ENCODE measurements at regions of chr13 and their contacts with region 1.

Region 1: GRCh38 chr13:40666045-40666904 is at the start of gene FOXO1:
- DNase-seq: peak; percentile 93
- ATAC-seq: peak; percentile 70
- H3K4me3 Mint-ChIP-seq: peak within 1 kb of the TSS; percentile 91
- H3K27ac Mint-ChIP-seq: peak within 1 kb of the TSS; percentile 92
- H3K4me1 Mint-ChIP-seq: peaks cover 39% of the 10 kb centered on the region
- H3K27me3 Mint-ChIP-seq: no peaks in the 10 kb centered on the region
- total RNA-seq, gene FOXO1: 37.5 to 42.5 TPM

Region 2: DNA sequence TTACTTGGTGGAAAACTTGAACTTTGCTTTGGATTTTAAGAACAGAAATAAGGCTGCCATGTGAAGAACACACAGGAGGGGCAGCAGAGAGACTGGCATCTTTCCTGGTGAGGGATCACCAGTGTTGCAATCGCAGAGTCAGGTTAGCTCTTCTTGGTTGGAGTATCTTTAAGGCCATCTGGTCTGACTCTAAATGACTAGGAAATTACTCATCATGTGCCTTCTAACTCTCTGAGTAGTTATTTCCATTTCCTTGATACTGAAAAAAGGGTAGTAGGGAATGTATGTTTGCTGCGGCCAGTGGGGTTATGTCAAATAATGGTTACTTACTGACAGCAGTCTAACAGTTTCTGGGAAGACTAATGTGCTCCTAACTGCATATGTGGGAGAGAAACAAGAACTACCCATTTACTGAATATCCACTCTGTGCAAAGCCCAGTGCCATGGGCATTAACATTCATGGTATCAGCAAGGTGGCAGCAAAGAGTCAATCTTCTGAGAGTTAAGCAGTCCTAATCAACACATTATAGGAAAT is 888.7 kb before region 1 on chr13:
- CTCF ChIA-PET with region 1: no interaction called
- POLR2A ChIA-PET with region 1: no interaction called
- intact Hi-C with region 1: loop called in 1 of 2 experiments (anchors 5 kb)
- DNase-seq: peak; percentile 70
- ATAC-seq: peak; percentile 83
- H3K4me3 Mint-ChIP-seq: peak overlapping the region; percentile 5
- H3K27ac Mint-ChIP-seq: peak overlapping the region; percentile 96
- H3K4me1 Mint-ChIP-seq: peaks cover 54% of the 10 kb centered on the region
- H3K27me3 Mint-ChIP-seq: no peaks in the 10 kb centered on the region

Region 3: DNA sequence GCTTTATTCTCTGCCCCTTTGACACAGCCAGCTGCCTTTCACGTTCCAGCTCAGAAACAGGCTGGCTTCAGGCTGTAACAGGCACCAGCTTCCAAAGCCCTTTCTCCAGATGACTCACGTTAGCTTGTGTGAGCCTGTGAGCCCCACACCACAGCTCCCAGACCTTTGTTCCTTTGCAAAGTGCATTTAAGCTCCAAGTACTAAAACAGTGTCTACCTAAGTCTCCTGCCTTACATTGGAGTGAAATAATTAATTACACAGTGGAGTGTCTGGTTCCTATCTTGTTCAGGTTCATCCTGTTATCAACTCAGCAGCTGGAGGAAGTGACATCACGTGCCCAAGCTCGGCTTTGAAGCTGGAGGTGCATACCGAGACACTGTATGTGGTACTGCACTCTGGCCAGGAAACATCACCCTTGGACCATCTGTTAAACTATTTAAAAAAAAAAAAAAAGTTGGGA is 475.6 kb before region 1 on chr13:
- CTCF ChIA-PET with region 1: no interaction called
- POLR2A ChIA-PET with region 1: no interaction called
- intact Hi-C with region 1: loop called (anchors 2 to 5 kb)
- DNase-seq: peak; percentile 81
- ATAC-seq: peak; percentile 43
- H3K4me3 Mint-ChIP-seq: peak overlapping the region; percentile 32
- H3K27ac Mint-ChIP-seq: peak overlapping the region; percentile 89
- H3K4me1 Mint-ChIP-seq: peaks cover 76% of the 10 kb centered on the region
- H3K27me3 Mint-ChIP-seq: no peaks in the 10 kb centered on the region

Region 4: DNA sequence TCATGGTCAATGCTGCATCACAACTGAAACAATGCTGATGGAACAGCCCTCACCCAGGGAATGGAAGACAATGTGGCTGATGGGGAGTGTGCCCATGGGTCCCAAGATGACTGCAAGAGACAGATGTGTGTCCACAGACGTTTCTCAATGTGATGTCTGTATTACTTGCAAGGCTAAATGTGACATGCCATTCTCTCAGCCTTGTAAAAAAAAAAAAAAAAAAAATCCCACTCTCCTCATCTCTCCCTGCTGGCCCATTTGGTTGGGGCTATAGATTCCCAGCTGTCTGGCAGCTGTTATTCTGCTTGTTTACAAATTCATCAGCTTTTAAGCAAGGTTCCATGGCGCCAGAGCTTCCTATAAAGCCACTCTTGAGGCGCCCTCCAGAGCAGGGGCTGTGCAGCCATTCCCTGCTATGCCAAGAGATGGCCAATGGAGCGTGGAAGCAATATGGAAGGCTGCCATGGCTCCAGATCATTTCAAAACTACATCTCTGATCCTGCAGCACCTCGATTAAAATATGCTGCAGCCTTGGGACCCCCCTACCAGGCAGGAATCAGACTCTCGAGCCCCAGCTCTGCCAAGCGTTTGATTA is 294.6 kb before region 1 on chr13:
- CTCF ChIA-PET with region 1: interaction called, 4 read pairs
- POLR2A ChIA-PET with region 1: no interaction called
- intact Hi-C with region 1: loop called (anchors 5 kb)
- DNase-seq: no peak
- ATAC-seq: no peak
- H3K4me3 Mint-ChIP-seq: no peak overlapping the region
- H3K27ac Mint-ChIP-seq: peak overlapping the region; percentile 61
- H3K4me1 Mint-ChIP-seq: peaks cover 42% of the 10 kb centered on the region
- H3K27me3 Mint-ChIP-seq: no peaks in the 10 kb centered on the region

Region 5: DNA sequence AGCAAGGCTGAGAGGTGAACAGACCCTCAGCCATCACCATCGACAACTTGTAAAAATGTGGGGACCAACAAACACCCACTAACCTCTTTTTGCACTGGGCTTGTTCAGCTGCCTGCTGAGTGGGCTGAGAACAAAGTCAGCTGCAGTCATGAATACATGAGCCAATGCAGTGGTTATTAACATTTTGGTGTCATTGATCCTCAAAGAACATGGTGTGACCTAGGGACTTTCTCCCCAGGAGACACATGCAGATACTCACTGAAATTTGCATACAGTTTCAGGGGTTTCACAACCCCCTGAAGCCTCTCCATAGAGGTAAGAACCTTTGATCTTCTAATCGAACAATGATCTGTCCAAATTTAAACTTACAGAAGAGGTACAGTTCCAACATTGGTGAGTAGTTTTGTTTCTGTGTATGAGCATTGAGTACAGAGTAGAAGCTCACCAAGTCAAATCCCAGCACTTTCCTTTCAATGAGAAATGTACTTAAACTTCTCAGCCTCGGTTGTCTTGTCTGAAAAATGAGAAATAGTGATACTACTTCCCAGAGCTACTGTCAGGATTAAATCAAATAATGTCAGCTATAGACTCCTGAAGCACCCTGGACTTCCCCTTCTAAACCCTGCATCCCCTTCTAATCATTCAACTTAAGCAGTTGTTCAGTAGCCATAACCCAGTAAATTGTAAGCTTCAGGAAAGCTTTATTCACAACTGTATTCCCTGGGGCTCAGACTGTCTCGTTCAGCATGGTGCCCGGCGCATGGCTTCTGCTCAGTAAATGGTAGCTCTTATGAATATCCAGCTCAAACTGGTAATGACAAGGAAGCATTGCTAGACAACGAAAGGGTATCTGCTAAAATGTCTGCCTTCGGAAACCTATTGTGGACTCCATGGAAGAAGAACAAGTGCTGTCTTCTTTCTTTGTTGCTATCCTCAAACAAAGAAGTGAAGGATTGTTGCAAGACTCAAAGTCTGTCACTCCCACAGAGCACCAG is 148.5 kb before region 1 on chr13:
- CTCF ChIA-PET with region 1: interaction called, 3 read pairs
- POLR2A ChIA-PET with region 1: interaction called, 5 read pairs
- intact Hi-C with region 1: loop called (anchors 1 kb)
- DNase-seq: peak; percentile 54
- ATAC-seq: peak; percentile 71
- H3K4me3 Mint-ChIP-seq: peak overlapping the region; percentile 44
- H3K27ac Mint-ChIP-seq: peak overlapping the region; percentile 91
- H3K4me1 Mint-ChIP-seq: peaks cover 84% of the 10 kb centered on the region
- H3K27me3 Mint-ChIP-seq: no peaks in the 10 kb centered on the region

Region 6: DNA sequence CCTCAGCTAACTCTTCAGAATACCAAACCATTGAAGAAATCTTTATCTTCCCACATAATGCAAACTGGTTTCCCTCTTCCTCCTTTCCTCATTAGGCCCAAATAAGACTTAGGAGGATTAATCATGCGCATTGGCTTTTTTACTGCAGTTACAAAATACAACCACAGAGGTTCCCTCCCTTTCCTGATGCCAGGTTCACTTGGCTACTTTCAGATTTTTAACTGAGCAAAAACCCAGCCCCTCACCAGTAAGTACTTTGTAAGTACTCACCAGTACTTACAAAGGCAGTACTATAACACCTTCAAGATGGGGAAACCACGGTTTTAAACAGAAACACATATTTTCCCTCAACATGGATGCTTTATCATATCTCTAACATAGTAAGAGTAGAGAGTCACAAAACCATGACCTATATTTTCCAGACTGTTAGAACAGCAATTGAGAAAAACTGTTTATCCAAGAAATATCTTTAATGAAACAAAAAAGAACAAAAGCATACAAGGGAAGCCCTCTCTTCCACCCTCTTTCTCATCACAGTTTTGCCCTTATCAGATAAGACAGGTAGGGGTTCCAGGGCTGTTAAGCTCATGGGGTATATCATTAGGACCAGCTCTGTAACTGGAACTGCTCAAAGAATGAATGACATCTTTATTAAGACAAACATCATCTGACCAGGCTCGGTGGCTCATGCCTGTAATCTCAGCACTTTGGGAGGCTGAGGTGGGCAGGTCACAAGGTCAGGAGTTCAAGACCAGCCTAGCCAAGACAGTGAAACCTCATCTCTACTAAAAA is 12.6 kb before region 1 on chr13:
- CTCF ChIA-PET with region 1: interaction called, 8 read pairs
- POLR2A ChIA-PET with region 1: interaction called, 4 read pairs
- intact Hi-C with region 1: loop called (anchors 1 kb)
- DNase-seq: peak; percentile 38
- ATAC-seq: peak; percentile 86
- H3K4me3 Mint-ChIP-seq: peak overlapping the region; percentile 38
- H3K27ac Mint-ChIP-seq: peak overlapping the region; percentile 87
- H3K4me1 Mint-ChIP-seq: peaks cover 95% of the 10 kb centered on the region
- H3K27me3 Mint-ChIP-seq: no peaks in the 10 kb centered on the region

Region 7: DNA sequence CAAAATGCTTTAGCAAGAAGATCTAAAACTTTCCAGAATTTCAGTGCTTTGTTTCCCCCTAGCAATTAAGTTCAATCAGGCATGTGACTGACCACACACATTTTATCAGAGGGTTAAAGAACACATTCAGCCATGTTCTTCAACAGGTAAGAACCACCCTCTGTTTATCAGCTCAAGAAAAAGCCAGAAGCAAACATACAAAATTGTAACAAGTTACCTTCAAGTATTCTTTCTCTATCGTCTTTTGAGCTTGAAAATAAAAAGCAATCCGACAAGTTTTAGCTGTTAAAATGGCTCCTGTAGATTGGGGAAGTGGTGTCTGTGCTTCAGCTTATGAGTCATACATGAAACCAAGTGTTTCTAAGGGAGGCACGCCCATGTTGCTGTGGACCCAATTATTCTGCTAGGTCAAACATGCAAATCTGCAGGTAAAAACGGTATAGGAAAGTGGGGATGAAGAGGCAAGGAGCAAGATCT is 352.8 kb after region 1 on chr13 and contains the start of gene ELF1:
- CTCF ChIA-PET with region 1: no interaction called
- POLR2A ChIA-PET with region 1: no interaction called
- intact Hi-C with region 1: loop called in 1 of 2 experiments (anchors 5 kb)
- DNase-seq: peak; percentile 67
- ATAC-seq: peak; percentile 87
- H3K4me3 Mint-ChIP-seq: peak within 1 kb of the TSS; percentile 88
- H3K27ac Mint-ChIP-seq: peak within 1 kb of the TSS; percentile 96
- H3K4me1 Mint-ChIP-seq: peaks cover 31% of the 10 kb centered on the region
- H3K27me3 Mint-ChIP-seq: no peaks in the 10 kb centered on the region
- total RNA-seq, gene ELF1: 75.2 to 87.0 TPM

Region 8: DNA sequence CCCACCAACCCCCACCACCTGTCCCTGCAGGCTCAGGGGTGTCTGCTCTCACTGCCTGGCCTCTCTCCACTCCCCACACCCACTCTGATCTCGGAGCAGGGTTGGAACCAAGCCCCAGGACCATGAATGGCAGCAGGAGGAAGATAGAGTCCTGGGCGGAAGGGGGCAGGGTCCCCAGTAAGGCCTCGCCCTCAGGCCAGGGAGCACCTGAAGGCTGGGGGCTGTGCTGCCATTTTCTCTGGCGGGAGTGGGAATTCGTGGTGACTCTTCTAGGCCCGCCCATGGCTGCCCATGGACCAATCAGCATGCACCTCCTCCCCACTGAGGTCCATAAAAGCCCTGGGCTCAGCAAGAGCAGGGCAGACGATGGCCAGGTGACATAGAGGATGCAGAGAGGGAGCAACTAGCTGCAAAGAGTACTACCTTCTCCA is 441.3 kb after region 1 on chr13:
- CTCF ChIA-PET with region 1: no interaction called
- POLR2A ChIA-PET with region 1: no interaction called
- intact Hi-C with region 1: no loop called
- DNase-seq: no peak
- ATAC-seq: no peak
- H3K4me3 Mint-ChIP-seq: no peak overlapping the region
- H3K27ac Mint-ChIP-seq: no peak overlapping the region
- H3K4me1 Mint-ChIP-seq: no peaks in the 10 kb centered on the region
- H3K27me3 Mint-ChIP-seq: no peaks in the 10 kb centered on the region